Stomach (tissue), 19 donors: ENCODE measurements at regions of chr9 and their contacts with region 1.

Region 1: DNA sequence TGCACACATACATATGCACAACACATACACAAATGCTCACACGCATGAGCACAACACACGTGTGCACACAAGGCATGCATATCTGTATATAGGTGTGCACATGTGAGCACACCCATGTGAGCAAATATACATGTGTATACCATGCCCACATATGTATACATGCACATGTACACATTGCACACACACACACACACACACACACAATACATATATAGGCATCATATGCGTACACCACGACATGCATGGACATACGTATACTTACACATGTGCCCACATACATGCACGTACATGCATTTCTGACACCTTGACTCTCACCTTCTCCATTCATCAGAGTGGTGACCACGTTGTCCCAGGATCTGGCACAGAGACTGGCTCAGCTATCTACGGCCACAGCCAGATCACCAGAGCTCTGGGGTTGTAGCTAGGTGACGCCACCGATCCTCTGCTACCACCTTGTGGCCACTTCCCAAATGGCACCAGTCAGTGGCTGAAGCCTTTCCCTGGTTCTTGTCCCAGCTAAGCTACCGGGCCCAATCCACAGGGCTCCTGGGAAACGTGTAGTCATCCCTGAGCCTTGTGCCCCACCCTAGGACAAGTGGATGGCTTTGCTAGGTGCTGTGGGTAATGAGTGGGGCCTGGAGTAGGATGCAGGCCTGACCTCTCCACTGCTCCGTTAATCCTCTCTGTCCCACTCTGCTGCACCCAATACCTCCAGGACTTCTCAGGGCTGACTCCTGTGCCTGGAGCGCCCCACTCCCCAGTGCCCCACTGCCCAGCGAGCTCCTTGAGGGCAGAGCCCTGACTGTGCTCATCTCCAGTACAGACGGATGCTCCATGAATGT is 194.4 kb downstream of the RGS3 start:
- DNase-seq: peak; percentile 91 to 95
- H3K4me3 ChIP-seq: no peak overlapping the region
- H3K27ac ChIP-seq: no peak overlapping the region
- H3K4me1 ChIP-seq: peaks cover 11 to 37% (median 22%) of the 10 kb centered on the region in 4 donors
- H3K27me3 ChIP-seq: peaks cover 0 to 12% (median 0%) of the 10 kb centered on the region in 3 donors
- CTCF ChIP-seq: peak in 6 of 7 experiments; percentile 24 to 97 (median 95)
- EP300 ChIP-seq: no peak
- POLR2A ChIP-seq: no peak

Region 2: DNA sequence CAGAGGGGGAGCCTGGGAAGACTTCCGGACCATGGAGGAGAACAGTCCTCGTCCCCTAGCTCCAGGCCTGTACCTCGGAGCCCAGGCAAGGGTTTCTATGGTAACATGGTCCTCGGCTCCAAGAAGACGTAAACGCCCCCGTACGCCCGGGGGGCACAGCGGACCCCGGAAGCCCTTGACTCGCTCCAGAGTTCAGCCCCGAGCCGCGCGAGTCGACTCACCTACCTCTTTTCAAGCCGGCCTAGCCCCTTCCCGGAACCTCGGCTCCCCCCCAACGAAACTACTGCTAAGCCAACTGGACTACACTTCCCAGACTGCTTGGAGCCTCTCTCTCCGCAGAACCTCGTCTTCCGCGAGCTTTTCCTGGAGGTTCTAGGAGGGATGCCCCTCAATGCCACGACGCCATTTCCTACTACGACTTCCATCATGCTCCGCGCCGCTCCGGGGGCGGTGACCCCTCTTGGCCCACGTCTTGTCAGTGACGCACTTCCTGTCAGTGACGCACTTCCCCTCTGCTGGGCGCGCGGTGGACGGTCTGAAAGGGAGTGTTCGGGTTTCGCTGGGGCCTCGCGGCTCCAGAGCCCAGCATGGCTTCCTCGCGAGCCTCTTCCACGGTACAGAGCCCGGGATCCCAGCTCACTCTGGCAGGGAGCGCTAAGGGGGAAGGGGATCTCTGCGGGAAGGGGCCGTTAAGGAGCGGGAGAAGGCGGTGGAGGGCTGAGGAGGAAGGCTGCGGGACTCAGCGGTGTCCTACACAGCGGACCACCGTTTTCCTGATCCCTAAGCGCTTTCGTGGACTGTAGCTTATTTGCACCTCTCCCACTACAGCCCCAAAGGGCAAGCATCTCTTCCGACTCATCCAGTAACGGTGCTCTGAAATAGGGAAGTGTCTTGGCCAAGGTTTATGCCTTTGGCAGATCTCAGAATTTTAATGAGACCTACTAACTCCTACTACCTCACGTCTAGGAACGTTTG is 382.5 kb before region 1 on chr9 and contains the starts of genes CDC26 and PRPF4:
- intact Hi-C with region 1: loop called (anchors 10 kb)
- DNase-seq: peak; percentile 97 to 99
- H3K4me3 ChIP-seq: peak within 1 kb of the TSS; percentile 58 to 84 (median 79)
- H3K27ac ChIP-seq: peak within 1 kb of the TSS; percentile 90 to 97 (median 96)
- H3K4me1 ChIP-seq: peaks cover 9 to 38% (median 29%) of the 10 kb centered on the region in 4 donors
- H3K27me3 ChIP-seq: no peaks in the 10 kb centered on the region
- CTCF ChIP-seq: peak in 1 of 7 experiments; percentile 22
- EP300 ChIP-seq: peak; percentile 9
- POLR2A ChIP-seq: peak in 2 of 4 donors; percentile 92 to 93
- total RNA-seq, gene CDC26: 7.2 to 46.1 (median 25.4) TPM
- total RNA-seq, gene PRPF4: 3.2 to 25.0 (median 9.9) TPM

Region 3: DNA sequence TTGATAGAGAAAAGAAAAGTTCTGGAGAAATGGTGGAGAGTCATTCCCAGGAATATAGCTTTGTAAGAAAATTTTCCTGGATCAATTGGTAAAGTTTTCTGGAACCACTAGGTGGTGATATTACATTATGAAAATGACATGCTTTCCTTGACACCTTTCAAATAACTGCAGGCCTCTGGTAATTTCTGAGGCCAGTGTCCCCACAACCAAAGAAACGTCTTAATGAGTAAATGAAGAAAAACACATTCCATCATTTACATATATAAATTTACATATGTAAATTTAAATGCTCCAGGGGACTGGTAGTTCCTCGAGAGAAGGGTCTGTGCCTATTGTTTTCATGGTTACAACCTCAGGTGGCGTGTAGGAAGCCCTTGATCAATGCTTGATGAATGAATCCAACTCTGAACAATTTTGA is 211.6 kb before region 1 on chr9:
- intact Hi-C with region 1: loop called (anchors 5 kb)
- DNase-seq: peak in 1 of 2 donors; percentile 76
- H3K4me3 ChIP-seq: no peak overlapping the region
- H3K27ac ChIP-seq: peak overlapping the region in 1 of 5 donors; percentile 46
- H3K4me1 ChIP-seq: peaks cover 0 to 14% (median 3%) of the 10 kb centered on the region in 4 donors
- H3K27me3 ChIP-seq: no peaks in the 10 kb centered on the region
- CTCF ChIP-seq: peak in 5 of 7 experiments; percentile 30 to 76 (median 52)
- EP300 ChIP-seq: no peak
- POLR2A ChIP-seq: no peak

Region 4: GRCh38 chr9:113591001-113591898 is 66.7 kb before region 1 on chr9:
- intact Hi-C with region 1: loop called (anchors 5 kb)
- DNase-seq: peak; percentile 88 to 93
- H3K4me3 ChIP-seq: no peak overlapping the region
- H3K27ac ChIP-seq: peak overlapping the region in 4 of 5 donors; percentile 24 to 57 (median 40)
- H3K4me1 ChIP-seq: peaks cover 45 to 93% (median 80%) of the 10 kb centered on the region in 4 donors
- H3K27me3 ChIP-seq: no peaks in the 10 kb centered on the region
- CTCF ChIP-seq: peak in 6 of 7 experiments; percentile 6 to 92 (median 88)
- EP300 ChIP-seq: no peak
- POLR2A ChIP-seq: no peak